Heart left ventricle (tissue), 16 donors: ENCODE measurements at regions of chr12 and their contacts with region 1.

Region 1: DNA sequence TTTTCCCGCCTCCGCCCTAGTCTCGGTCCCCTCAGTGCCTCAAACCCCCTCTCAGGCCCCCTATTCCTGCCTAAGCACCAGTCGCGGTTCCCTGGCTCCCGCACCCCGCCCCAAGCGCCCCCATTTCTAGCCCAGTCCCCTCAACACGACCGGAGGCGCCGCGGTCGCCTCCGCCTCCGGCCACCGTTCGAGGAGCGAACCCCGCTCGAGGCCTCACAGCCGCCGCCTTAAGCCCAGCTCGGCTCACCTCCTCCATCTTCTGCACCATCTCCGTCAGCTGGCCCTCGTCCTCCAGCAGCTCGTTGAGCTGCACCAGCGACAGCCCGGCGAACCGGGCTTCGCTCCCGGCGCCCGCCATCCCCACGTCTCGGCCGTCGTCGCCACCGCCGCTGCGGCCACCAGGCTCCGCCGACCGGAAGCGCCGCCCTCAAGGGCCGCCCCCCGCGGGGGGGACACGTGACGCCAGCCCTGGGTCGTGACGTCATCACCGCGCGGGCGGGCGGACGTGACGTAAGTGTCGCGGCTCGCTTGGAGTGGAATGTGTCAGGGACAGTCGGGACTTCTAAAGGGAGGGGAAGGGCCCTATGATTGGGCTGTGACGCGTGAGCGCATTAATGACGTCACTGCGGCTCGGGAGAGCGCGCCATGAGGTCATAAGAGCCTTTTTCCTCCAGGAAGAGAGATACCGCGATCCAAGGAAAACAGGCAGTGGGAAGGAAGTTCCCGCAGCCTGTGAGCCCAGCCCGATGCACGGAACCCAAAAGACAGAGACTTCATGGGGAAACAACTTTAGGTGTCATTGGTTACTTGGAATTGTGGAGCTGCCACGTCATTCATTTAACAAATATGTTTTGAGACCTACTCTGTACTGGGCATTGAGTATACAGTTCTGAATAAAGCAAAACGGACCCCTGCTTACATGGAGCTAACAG is at the start of gene VPS37B:
- DNase-seq: peak; percentile 83 to 92 (median 85)
- ATAC-seq: peak; percentile 22 to 89 (median 84)
- H3K4me3 ChIP-seq: peak within 1 kb of the TSS; percentile 57 to 91 (median 82)
- H3K27ac ChIP-seq: peak within 1 kb of the TSS; percentile 58 to 93 (median 86)
- H3K4me1 ChIP-seq: peaks cover 0 to 70% (median 41%) of the 10 kb centered on the region in 12 donors
- H3K27me3 ChIP-seq: no peaks in the 10 kb centered on the region
- CTCF ChIP-seq: peak in 1 of 12 donors; percentile 9
- POLR2A ChIP-seq: peak; percentile 53 to 92
- total RNA-seq, gene VPS37B: 14.5 to 51.2 (median 22.7) TPM

Region 2: GRCh38 chr12:122834104-122834920 is 61.7 kb before region 1 on chr12:
- intact Hi-C with region 1: no loop called
- DNase-seq: peak in 1 of 5 donors; percentile 54
- ATAC-seq: peak; percentile 17 to 55 (median 51)
- H3K4me3 ChIP-seq: peak overlapping the region; percentile 39 to 92 (median 73)
- H3K27ac ChIP-seq: peak overlapping the region in 11 of 12 donors; percentile 44 to 82 (median 77)
- H3K4me1 ChIP-seq: peaks cover 0 to 32% (median 14%) of the 10 kb centered on the region in 12 donors
- H3K27me3 ChIP-seq: peaks cover 0 to 8% (median 0%) of the 10 kb centered on the region in 9 donors
- CTCF ChIP-seq: peak in 4 of 12 donors; percentile 16 to 36 (median 28)
- POLR2A ChIP-seq: no peak

Region 3: DNA sequence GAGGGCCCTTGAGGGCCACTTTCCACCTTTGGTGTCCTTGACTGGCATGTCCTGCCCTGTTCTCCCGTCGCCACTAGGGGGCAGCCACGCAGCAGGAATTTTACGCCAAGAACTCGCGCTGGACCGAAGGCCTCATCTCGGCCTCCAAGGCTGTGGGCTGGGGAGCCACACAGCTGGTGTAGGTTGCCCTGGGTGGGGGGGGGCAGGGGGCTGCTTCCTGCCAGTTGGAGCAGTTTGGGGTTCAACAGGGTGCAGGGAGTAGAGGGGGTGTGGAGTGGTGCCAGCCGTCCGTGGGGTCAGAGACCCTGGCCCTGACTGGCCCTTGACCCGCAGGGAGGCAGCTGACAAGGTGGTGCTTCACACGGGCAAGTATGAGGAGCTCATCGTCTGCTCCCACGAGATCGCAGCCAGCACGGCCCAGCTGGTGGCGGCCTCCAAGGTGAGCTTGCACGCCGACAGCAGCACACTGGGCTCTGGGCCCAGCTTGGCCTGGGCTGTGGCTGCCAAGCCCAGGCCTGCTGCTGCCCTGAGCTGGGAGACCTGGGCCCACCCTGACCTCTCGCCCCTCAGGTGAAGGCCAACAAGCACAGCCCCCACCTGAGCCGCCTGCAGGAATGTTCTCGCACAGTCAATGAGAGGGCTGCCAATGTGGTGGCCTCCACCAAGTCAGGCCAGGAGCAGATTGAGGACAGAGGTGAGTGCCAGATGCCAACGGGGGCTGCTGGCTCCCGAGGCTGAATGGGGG is 35.5 kb before region 1 on chr12:
- intact Hi-C with region 1: loop called in 2 of 10 experiments (anchors 5 kb)
- DNase-seq: peak; percentile 85 to 92 (median 87)
- ATAC-seq: peak; percentile 56 to 80 (median 72)
- H3K4me3 ChIP-seq: no peak overlapping the region
- H3K27ac ChIP-seq: peak overlapping the region in 9 of 12 donors; percentile 21 to 72 (median 49)
- H3K4me1 ChIP-seq: peaks cover 0 to 48% (median 25%) of the 10 kb centered on the region in 12 donors
- H3K27me3 ChIP-seq: no peaks in the 10 kb centered on the region
- CTCF ChIP-seq: peak; percentile 83 to 95 (median 88)
- POLR2A ChIP-seq: no peak

Region 4: DNA sequence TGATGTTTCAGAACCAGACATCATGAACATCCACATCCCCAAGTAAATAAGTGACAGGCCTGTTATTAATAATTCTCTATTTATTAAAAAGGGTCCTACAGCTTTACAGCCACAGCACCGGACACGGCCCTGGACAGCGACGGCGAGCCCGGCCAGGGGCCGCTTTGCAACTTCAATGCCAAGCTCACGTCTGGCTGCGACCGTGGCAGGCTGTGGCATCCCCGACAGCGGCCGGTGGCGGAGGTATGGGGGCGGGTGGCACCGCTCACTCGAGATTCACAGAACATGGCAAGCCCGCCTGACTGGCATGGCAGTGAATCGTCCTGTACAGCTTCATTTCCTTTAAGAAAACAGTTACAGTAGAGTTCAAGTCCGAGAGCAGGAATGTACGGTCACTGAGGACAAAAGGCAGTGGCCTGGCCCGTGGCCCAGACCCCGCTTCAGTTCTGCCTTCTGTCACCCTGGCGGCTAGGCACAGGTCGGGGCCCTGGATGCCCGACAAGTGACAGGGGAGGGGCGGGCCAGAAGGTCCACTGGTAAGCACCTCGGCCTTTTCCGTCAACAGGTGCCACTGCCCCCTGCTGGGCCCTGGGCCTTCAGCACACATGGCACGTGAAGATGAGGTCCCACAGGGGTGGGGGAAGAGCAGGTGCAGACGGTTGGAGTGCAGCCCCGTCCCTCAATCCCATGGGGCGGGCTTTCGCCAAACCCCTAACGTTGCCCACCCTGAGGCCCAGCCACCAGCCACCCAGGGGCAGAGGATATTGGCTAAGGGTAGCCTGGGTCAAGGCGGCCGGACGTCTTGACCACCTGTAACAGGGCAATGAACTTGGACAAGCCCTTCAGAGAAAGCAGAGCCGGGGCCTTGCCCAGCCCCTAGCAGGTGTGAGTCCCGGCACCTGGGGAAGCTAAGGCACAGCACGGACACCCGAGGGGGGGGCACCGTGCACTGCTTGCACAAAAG is 30.4 kb before region 1 on chr12:
- intact Hi-C with region 1: loop called in 3 of 10 experiments (anchors 2 to 5 kb)
- DNase-seq: peak in 3 of 5 donors; percentile 69 to 81 (median 77)
- ATAC-seq: peak; percentile 5 to 35 (median 20)
- H3K4me3 ChIP-seq: no peak overlapping the region
- H3K27ac ChIP-seq: peak overlapping the region in 11 of 12 donors; percentile 15 to 89 (median 78)
- H3K4me1 ChIP-seq: peaks cover 8 to 85% (median 67%) of the 10 kb centered on the region in 12 donors
- H3K27me3 ChIP-seq: no peaks in the 10 kb centered on the region
- CTCF ChIP-seq: peak; percentile 13 to 55 (median 30)
- POLR2A ChIP-seq: no peak

Region 5: DNA sequence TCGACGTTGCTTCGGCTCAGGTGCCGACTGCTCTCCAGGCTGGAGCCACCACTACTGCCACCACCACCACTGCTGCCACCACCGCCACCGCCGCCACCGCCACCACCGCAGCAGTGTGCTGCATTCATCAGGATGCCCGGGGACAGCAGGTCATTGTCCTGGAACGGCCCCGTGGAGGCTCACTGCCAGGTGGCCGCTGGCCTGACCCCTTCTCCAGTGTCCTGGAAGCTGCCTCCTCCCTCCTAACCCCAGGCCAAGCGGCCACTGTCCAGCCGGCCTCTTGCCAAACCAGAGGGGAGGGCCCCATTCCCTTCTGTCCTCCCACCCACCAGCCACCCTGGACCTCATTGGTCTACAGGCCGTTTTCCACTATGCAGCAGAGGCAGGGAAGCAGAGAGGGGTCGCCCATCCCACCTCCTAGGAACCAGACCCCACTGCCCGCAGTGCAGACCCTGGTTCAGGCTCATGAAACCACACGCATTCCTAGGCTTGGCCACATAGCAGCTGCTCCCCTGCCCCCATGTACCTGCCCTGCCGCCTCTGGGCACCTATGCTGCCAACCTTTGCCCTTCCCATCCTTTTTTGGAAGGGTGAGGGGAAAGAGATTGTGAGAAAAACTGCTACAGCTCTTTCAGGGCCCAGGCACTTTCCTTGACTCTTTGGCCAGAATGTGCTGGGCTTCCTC is 99.7 kb after region 1 on chr12:
- intact Hi-C with region 1: no loop called
- DNase-seq: peak in 3 of 5 donors; percentile 56 to 73 (median 62)
- ATAC-seq: peak; percentile 25 to 38 (median 30)
- H3K4me3 ChIP-seq: no peak overlapping the region
- H3K27ac ChIP-seq: peak overlapping the region in 1 of 12 donors; percentile 33
- H3K4me1 ChIP-seq: peaks cover 0 to 27% (median 4%) of the 10 kb centered on the region in 12 donors
- H3K27me3 ChIP-seq: no peaks in the 10 kb centered on the region
- CTCF ChIP-seq: no peak
- POLR2A ChIP-seq: no peak

Region 6: GRCh38 chr12:123085730-123086487 is 189.9 kb after region 1 on chr12:
- intact Hi-C with region 1: no loop called
- DNase-seq: peak in 4 of 5 donors; percentile 55 to 82 (median 80)
- ATAC-seq: peak in 3 of 4 donors; percentile 63 to 75 (median 69)
- H3K4me3 ChIP-seq: no peak overlapping the region
- H3K27ac ChIP-seq: peak overlapping the region in 11 of 12 donors; percentile 35 to 82 (median 68)
- H3K4me1 ChIP-seq: peaks cover 14 to 89% (median 63%) of the 10 kb centered on the region in 12 donors
- H3K27me3 ChIP-seq: no peaks in the 10 kb centered on the region
- CTCF ChIP-seq: peak in 1 of 12 donors; percentile 10
- POLR2A ChIP-seq: no peak